Colonic mucosa (tissue), 4 donors: ENCODE measurements at regions of chr11 and their contacts with region 1.

Region 1: DNA sequence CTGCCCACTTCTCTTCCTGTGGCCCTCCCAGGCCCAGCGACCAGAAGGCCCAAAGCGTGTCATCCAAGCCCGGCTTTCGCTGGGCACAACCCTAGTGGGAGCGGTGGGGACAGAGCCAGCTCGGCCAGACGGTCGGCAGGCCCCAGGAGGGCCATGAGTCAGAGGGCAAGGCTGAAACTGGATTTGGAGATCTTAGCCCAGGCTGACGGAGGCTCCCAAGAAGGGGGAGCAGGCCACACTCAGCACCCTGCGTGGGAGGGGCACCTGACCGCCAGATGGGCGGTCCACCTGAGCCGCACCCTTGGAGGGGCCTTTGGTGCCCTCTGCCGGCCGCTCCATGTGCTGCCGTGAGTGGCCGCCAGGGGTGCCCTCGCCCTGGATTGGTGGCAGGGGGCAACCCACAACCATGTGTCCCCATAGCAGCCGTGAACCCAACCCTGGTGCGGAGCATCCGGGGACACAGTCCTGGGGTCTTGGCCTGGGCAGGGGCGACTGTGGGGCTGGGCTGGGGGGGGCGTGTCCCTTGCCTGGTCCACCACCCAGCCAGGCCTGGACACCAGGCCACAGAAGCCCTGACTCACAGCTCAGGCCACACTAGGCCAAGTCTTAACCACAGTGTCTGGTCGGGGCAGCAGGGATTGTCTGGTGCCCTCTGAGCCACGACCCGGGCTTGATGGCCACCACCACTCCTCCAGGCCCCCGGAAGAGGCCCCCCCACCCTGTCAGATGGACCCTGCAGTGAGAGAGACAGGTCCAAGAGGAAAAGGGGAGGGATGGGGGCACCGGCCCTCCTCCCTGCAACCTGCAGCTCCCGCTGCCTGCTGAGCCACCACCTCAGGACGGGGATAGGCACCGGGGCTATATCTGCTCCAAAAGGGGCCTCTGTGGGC is 19.2 kb upstream of the TALDO1 start:
- DNase-seq: peak; percentile 85
- H3K4me3 ChIP-seq: no peak overlapping the region
- H3K27ac ChIP-seq: no peak overlapping the region
- H3K4me1 ChIP-seq: peaks cover 30% of the 10 kb centered on the region
- H3K27me3 ChIP-seq: peaks cover 5% of the 10 kb centered on the region
- CTCF ChIP-seq: peak; percentile 97

Region 2: GRCh38 chr11:554824-555472 is 173.2 kb before region 1 on chr11:
- intact Hi-C with region 1: loop called (anchors 10 kb)
- DNase-seq: peak; percentile 79
- H3K4me3 ChIP-seq: peak overlapping the region; percentile 35
- H3K27ac ChIP-seq: no peak overlapping the region
- H3K4me1 ChIP-seq: no peaks in the 10 kb centered on the region
- H3K27me3 ChIP-seq: peaks cover 20% of the 10 kb centered on the region
- CTCF ChIP-seq: peak; percentile 29

Region 3: GRCh38 chr11:615504-616319 is 112.4 kb before region 1 on chr11 and contains the start of gene IRF7:
- intact Hi-C with region 1: no loop called
- DNase-seq: peak; percentile 97
- H3K4me3 ChIP-seq: peak within 1 kb of the TSS; percentile 69
- H3K27ac ChIP-seq: peak within 1 kb of the TSS; percentile 95
- H3K4me1 ChIP-seq: peaks cover 41% of the 10 kb centered on the region
- H3K27me3 ChIP-seq: no peaks in the 10 kb centered on the region
- CTCF ChIP-seq: no peak
- total RNA-seq, gene IRF7: 22.1 to 25.6 TPM

Region 4: DNA sequence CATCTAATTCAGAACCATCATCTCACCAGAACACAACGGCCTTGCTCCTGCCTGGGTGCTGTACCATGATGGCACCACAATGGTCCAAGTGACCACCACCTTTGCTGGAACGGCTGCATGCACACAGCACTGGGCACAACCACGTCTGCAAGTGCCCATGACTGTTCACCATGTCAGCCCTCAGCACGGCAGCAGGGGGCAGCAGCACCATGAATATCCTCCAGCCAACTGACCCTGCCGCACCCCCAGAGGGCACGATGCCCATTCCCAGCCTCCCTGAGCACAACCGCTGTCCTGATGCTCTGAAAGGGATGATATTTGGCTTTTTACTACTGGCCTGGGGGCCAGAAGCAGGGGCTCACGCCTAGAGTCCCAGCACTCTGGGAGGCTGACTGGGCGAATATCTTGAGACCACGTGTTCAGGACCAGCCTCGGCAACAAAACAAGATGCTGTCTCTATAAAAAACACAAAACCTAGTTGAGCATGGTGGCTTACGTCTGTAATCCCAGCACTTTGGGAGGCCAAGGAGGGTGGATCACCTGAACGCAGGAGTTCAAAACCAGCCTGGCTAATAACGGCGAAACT is 65.3 kb before region 1 on chr11:
- intact Hi-C with region 1: loop called (anchors 5 kb)
- DNase-seq: peak; percentile 73
- H3K4me3 ChIP-seq: no peak overlapping the region
- H3K27ac ChIP-seq: no peak overlapping the region
- H3K4me1 ChIP-seq: no peaks in the 10 kb centered on the region
- H3K27me3 ChIP-seq: no peaks in the 10 kb centered on the region
- CTCF ChIP-seq: peak; percentile 73